Posterior cingulate gyrus (tissue), 11 donors: ENCODE measurements at regions of chr21 and their contacts with region 1.

Region 1: DNA sequence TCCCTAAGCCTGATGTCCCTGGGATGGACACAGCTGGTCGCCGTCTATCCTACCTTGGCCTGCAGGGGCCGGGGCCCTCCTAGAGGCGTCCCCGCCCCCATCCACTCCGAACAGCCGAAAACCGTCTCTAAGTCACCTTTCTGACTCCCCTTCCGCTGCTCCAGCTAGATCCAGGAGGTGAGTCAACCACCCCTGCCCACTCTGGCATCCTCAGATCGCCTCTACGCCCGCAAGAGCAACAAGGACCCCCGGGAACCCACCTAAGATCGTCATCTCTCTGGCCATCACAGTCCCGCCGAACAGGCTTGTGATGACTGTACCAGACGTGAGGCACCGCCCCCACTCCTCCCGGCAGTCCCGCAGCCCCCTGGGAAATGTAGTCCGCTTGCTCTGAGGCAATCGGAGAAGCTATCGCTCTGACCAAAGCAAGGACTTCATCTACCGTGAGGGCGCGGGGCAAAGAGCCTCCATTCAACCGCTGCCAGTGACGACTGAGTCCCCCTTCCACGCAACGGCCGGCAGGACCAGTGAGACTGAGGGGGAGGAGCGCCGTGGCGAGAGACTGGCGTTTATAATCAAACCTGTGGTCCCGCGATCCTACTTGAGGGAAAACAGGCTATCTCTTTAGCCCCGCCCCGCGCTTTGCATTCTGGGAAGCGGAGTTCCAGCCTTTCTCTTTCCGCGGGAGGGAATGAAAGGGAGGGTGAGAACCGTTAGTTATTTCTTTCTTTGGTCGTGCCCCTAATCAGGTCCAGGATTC is at the start of gene HSPA13:
- DNase-seq: peak; percentile 99 to 100 (median 100)

Region 2: DNA sequence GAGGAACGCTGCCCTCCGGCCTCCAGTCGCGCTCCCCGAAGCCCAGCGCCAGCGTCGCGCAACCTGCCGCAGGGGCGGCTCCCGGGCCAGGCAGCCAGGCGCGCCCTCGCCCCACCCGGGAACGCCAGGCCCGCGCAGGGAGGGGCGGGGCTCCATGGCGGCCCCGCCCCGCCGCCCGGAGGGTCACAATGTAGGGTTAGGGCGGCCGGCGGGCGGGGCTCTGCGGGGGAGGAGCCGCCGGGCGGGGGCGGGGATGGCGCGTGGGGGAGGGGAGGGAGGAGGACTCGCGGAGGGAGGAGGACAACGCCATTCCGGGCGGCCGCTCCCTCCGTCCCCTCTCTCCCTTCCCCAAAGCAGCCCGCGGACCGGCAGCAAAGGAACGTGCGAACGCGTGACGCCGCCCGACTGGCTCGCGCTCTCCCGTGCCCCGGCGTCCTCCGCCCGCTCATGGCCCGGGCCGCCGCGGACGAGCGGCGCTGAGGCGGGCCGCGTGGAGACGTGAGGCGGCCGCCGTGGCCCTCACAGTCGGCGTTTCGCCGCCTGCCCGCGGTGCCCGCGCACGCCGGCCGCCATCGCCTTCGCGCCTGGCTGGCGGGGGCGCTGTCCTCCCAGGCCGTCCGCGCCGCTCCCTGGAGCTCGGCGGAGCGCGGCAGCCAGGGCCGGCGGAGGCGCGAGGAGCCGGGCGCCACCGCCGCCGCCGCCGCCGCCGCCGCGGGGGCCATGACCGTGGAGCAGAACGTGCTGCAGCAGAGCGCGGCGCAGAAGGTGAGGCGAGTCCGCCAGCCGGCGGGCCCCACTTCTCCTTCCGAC is 1346.9 kb after region 1 on chr21 and contains the start of gene USP25:
- intact Hi-C with region 1: loop called (anchors 2 kb)
- DNase-seq: peak; percentile 75 to 97 (median 80)